Heart left ventricle (tissue), 16 donors: ENCODE measurements at regions of chr4 and their contacts with region 1.

Region 1: DNA sequence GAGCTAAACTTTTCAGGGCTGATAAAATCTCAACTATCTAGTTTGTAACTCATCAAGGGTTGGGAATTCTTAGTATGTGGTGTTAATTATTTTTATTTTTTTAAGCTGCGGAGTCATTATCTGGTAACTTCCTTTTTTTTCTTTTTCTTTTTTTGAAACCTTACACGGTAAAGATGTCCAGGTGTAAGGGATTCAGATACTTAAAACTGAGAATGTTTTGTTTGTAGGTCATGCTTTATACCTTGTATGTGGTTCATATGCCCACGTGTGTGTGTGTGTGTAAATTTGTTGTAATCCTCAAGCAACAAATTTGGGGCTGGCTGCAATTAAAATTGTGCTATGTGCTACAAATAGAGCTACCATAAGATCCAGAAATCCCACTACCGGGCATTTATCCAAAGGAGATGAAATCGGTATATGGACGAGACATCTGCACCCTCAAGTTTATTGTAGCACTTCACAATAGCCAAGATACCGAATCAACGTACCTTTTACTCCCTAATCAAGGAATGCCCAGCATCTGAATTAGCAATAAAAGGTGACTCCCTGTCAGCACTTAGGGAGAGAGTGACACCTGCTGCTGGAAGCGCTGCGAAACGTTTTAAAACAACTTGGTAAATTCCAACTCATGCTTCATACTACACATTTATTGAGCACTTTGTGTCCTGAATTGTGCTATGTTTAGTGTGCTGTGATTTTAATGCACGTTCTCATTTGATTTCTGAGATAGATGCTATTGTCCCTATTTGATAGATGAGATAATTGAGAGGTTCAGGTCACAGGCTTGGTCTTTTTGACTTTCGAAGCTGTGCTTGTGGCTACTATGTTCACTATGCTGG is 16.1 kb downstream of the MSMO1 start:
- DNase-seq: no peak
- ATAC-seq: no peak
- H3K4me3 ChIP-seq: no peak overlapping the region
- H3K27ac ChIP-seq: no peak overlapping the region
- H3K4me1 ChIP-seq: no peaks in the 10 kb centered on the region
- H3K27me3 ChIP-seq: no peaks in the 10 kb centered on the region
- CTCF ChIP-seq: peak in 7 of 12 donors; percentile 16 to 48 (median 34)
- POLR2A ChIP-seq: no peak

Region 2: GRCh38 chr4:165059386-165059785 is 284.2 kb before region 1 on chr4:
- intact Hi-C with region 1: no loop called
- DNase-seq: no peak
- ATAC-seq: no peak
- H3K4me3 ChIP-seq: no peak overlapping the region
- H3K27ac ChIP-seq: no peak overlapping the region
- H3K4me1 ChIP-seq: no peaks in the 10 kb centered on the region
- H3K27me3 ChIP-seq: no peaks in the 10 kb centered on the region
- CTCF ChIP-seq: no peak
- POLR2A ChIP-seq: no peak

Region 3: DNA sequence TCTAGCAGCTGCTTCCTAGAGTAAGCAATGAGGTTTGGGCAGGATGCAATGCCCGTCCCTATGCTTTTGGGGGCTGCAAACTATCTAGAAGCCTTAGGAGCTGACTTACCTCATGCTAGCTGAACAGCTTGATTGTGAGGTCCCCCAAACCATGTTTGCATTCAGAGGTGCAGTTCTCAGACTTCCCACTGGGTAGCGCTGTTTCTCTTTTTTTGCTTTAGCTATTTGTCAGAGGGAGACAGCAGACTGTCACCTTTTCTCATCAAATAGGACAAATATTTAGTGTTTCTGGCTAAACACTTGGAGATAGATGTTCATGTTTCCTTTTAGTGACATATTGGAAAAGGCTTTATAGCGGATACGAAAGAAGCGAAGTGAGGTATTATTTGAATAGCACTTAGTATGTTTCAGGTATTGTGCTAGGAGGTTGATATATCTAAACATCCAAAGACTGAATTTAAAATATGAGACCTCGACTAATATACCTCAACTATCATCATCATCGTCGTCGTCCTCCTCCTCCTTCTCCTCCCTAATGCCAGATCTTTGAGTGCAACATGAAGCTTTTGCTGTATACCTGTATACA is 212.2 kb before region 1 on chr4:
- intact Hi-C with region 1: loop called (anchors 1 to 10 kb)
- DNase-seq: peak in 2 of 5 donors; percentile 35 to 45
- ATAC-seq: peak in 3 of 4 donors; percentile 64 to 80 (median 65)
- H3K4me3 ChIP-seq: no peak overlapping the region
- H3K27ac ChIP-seq: no peak overlapping the region
- H3K4me1 ChIP-seq: peaks cover 0 to 19% (median 0%) of the 10 kb centered on the region in 12 donors
- H3K27me3 ChIP-seq: peaks cover 0 to 5% (median 0%) of the 10 kb centered on the region in 9 donors
- CTCF ChIP-seq: peak; percentile 78 to 94 (median 82)
- POLR2A ChIP-seq: no peak

Region 4: GRCh38 chr4:165136529-165136928 is 207.0 kb before region 1 on chr4:
- intact Hi-C with region 1: loop called in 9 of 10 experiments (anchors 1 to 10 kb)
- DNase-seq: no peak
- ATAC-seq: no peak
- H3K4me3 ChIP-seq: no peak overlapping the region
- H3K27ac ChIP-seq: no peak overlapping the region
- H3K4me1 ChIP-seq: peaks cover 0 to 19% (median 0%) of the 10 kb centered on the region in 12 donors
- H3K27me3 ChIP-seq: no peaks in the 10 kb centered on the region
- CTCF ChIP-seq: no peak
- POLR2A ChIP-seq: no peak